ENCODE measurements at regions of chr7 and their contacts with region 1.

Region 1: DNA sequence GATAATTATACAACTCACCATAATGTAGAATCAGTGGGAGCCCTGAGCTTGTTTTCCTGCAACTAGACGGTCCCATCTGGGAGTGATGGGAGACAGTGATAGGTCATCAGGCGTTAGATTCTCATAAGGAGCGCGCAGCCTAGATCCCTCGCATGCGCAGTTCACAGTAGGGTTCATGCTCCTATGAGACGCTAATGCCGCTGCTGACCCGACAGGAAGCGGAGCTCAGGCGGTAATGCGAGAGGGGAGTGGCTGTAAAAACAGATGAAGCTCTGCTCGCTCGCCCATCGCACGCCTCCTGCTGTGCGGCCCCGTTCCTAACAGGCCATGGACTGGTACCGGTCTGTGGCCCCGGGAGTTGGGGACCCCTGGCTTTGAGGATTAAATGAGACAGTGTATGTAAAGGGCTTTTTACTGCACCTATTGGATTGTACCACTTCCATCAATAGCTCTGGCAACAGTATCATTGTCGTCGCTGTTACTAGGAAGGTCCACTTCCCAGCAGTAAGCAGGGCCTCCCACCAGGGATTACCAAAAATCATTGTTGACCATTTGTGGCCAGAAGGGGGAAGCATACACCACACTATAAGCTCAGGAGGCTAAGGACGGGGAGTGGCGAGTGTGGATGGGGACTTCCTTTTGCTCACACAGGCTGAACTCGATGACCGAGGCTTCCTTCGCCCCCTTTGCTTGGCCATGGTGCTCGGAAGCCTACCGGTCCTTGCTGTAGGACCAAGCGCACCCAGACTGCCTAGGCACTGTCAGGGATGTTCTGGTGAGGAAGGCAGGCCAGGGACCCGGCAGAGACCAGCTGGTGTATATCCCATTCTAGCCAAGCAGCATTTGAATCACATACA is 26.4 kb downstream of the AKR1B1 start:
- DNase-seq: peak; percentile 92
- ATAC-seq: peak; percentile 95
- H3K4me3 ChIP-seq: peak overlapping the region; percentile 72
- H3K27ac ChIP-seq: peak overlapping the region; percentile 56
- H3K4me1 ChIP-seq: peaks cover 28% of the 10 kb centered on the region
- H3K27me3 ChIP-seq: no peaks in the 10 kb centered on the region
- CTCF ChIP-seq: peak; percentile 91

Region 2: DNA sequence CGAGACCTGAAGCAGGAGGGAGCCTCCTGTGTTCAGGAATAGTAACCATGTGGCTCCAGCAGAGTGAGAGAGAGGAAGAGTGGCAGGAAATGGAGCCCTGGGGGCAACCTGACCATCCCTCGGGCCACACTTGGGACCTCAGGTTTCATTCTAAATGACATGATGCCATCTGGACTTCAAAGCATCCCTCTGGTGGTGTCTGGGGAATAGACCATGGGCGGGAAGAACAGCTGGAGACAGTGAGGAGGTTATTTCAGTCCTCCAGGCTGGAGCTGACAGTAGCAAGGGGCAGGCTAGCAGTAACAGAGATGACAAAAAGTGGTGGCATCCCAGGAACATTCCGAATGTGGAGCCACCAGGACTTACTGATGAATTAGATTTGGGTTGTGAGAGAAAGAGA is 18.4 kb before region 1 on chr7:
- CTCF ChIA-PET with region 1: no interaction called
- POLR2A ChIA-PET with region 1: no interaction called
- intact Hi-C with region 1: no loop called
- DNase-seq: no peak
- ATAC-seq: no peak
- H3K4me3 ChIP-seq: no peak overlapping the region
- H3K27ac ChIP-seq: no peak overlapping the region
- H3K4me1 ChIP-seq: peaks cover 2% of the 10 kb centered on the region; the same call in 1 of the 2 replicates
- H3K27me3 ChIP-seq: no peaks in the 10 kb centered on the region
- CTCF ChIP-seq: no peak

Region 3: DNA sequence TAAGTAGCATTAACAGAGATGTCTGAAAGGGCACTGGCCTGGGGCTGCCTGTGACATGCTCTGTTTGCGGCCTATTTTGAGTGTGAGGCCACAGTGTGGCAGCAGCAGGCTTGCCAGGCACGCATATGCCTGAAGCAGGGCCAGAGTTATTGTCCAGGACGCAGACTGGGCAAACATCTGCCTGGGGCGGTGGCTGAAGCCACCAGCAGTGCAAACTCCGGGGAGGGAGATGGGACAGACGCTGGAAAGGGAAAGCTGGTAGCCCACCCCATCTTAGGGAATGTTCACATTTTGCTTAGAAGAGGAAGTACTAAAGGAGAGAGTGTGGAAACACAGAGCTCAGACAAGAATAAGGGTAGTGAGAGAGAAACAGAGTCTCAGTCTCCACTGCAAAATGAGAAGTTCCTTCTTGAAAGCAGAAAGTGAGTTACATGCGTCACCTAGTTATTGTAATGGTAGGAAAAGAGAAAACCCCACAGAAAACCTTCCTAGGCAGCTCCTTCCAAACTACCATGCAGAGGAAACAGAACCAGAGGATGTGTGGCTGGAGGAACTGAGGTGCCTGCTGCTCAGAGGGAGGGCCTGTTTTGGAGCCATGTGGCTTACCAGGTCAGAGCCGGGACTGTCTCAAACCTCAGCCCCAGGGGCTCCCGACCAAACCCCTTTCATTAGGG is 11.8 kb after region 1 on chr7:
- CTCF ChIA-PET with region 1: interaction called, 13 read pairs
- POLR2A ChIA-PET with region 1: interaction called, 3 read pairs
- intact Hi-C with region 1: no loop called
- DNase-seq: peak; percentile 74
- ATAC-seq: peak; percentile 81
- H3K4me3 ChIP-seq: no peak overlapping the region
- H3K27ac ChIP-seq: 0 out of 2 replicates have a peak overlapping the region, but pooled peaks have one; percentile 2
- H3K4me1 ChIP-seq: peaks cover 37% of the 10 kb centered on the region
- H3K27me3 ChIP-seq: no peaks in the 10 kb centered on the region
- CTCF ChIP-seq: peak; percentile 76

Region 4: GRCh38 chr7:134514663-134515062 is 82.1 kb after region 1 on chr7:
- CTCF ChIA-PET with region 1: interaction called, 47 read pairs
- POLR2A ChIA-PET with region 1: interaction called, 3 read pairs
- intact Hi-C with region 1: loop called (anchors 1 kb)
- DNase-seq: peak; percentile 93
- ATAC-seq: peak; percentile 4; the same call in 1 of the 2 replicates
- H3K4me3 ChIP-seq: no peak overlapping the region
- H3K27ac ChIP-seq: peak overlapping the region; percentile 96
- H3K4me1 ChIP-seq: peaks cover 55% of the 10 kb centered on the region
- H3K27me3 ChIP-seq: no peaks in the 10 kb centered on the region
- CTCF ChIP-seq: peak; percentile 80

Region 5: DNA sequence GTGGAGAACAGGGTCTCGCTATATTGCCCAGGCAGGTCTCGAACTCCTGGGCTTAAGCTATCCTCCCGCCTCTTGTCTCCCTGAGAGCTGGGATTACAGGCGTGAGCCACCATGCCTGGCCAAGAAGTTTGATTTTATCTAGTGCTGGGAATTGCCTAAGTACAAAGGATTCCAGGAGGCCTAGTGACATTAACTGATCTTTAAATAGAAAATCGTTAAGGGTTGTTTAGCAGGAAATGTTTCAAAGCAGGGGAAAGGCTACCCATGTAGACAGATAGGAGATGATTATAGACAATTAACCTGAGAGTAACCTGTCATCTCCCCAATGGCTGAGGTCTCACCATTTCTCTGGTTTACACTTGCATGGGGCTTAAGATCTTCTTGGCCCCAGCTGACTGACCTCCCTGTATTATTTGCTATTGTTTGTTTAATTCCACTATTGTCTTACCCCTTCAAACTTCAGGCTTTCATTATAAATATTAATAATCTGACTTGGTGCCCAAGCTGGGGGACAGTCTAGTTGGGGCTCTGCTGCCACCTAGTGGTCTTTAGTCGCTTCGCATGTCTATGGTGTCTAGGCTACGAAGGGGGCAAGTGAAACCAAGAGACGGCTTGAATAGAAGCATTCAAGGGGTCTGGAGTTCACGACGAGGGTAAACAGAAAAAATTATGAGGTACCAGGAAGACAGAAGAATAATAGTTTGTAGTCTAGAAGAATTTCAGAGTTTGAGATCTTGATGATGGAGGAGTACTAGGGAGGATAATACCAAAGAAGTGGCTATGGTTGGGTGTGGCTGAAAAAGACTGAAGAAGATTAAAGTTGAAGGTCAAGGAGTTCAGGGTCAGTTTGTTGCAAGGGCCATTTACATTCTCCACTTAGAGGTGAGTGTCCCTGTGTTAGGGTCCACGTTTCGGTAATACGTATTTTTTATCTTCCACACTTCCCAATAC is 173.7 kb after region 1 on chr7:
- CTCF ChIA-PET with region 1: no interaction called
- POLR2A ChIA-PET with region 1: no interaction called
- intact Hi-C with region 1: loop called (anchors 2 kb)
- DNase-seq: peak; percentile 78
- ATAC-seq: peak; percentile 96
- H3K4me3 ChIP-seq: peak overlapping the region; percentile 24; the same call in 1 of the 2 replicates
- H3K27ac ChIP-seq: peak overlapping the region; percentile 56
- H3K4me1 ChIP-seq: peaks cover 11% of the 10 kb centered on the region
- H3K27me3 ChIP-seq: no peaks in the 10 kb centered on the region
- CTCF ChIP-seq: peak; percentile 96